ENCODE measurements at regions of chr7 and their contacts with region 1.

Region 1: DNA sequence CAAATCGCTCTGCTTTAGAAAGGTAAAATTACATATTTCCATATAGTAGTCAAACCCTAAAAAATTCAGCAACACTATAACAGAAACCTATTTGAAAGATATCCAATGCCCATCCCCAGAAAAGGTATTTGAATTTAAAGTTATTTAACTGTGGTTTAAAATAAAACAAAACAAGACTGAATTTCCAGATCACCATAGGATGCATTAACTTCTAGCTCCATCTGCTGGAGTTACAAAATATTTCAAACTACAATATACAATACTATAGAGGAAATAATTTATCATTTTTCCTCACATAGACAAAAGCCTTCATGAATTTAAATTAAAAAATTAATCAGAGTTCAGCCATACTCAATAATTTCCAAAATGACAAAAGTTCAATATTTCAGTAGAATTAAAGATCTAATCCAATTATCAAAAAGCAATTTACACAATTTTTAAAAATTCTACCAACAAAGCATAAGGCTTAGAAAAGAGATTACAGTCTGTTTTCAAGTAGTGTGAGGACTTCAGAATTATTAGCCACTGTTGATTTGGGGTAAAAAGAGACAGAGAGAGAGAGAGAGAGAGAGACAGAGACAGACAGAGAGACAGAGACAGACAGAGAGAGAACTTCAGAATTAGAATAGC is 75.9 kb downstream of the LMBR1 start:
- H3K4me3 Mint-ChIP-seq: no peak overlapping the region
- H3K27ac Mint-ChIP-seq: no peak overlapping the region
- H3K4me1 Mint-ChIP-seq: no peaks in the 10 kb centered on the region
- H3K27me3 Mint-ChIP-seq: no peaks in the 10 kb centered on the region

Region 2: DNA sequence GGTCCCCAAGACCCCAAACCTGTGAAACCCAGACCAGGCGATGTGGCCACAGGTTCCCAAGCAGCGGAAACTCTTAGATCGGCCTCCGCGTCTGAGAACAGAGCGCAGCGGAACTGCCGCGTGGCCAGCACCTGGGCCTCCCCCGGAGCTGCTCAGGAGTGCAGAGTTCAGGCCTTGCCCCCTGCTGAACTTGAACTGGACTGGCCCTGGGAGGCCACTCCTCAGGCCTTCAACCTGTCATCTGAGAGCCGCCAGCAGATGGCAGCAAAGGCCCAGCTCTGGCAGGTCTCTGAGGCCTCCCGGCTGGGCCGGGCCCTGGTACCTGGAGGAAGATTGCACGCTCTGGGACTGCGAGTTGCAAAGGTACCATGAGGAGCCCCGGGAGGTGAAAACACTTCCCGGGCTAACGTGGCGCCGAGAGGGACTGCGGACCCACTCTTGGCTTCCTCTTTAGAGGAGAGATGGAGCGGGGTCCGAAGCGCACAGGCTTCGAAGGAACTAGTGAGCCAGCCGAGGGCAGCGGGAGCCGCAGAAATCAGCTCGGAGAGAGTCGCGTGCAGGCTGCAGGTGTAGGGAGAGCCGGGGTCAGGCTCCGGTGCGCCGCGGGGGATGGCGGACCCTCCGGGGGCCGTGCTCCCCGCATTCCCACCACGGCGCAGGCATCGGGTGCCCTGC is 1903.3 kb before region 1 on chr7:
- intact Hi-C with region 1: loop called (anchors 10 kb)
- H3K4me3 Mint-ChIP-seq: peak overlapping the region; percentile 66
- H3K27ac Mint-ChIP-seq: no peak overlapping the region
- H3K4me1 Mint-ChIP-seq: peaks cover 5% of the 10 kb centered on the region
- H3K27me3 Mint-ChIP-seq: peaks cover 29% of the 10 kb centered on the region

Region 3: DNA sequence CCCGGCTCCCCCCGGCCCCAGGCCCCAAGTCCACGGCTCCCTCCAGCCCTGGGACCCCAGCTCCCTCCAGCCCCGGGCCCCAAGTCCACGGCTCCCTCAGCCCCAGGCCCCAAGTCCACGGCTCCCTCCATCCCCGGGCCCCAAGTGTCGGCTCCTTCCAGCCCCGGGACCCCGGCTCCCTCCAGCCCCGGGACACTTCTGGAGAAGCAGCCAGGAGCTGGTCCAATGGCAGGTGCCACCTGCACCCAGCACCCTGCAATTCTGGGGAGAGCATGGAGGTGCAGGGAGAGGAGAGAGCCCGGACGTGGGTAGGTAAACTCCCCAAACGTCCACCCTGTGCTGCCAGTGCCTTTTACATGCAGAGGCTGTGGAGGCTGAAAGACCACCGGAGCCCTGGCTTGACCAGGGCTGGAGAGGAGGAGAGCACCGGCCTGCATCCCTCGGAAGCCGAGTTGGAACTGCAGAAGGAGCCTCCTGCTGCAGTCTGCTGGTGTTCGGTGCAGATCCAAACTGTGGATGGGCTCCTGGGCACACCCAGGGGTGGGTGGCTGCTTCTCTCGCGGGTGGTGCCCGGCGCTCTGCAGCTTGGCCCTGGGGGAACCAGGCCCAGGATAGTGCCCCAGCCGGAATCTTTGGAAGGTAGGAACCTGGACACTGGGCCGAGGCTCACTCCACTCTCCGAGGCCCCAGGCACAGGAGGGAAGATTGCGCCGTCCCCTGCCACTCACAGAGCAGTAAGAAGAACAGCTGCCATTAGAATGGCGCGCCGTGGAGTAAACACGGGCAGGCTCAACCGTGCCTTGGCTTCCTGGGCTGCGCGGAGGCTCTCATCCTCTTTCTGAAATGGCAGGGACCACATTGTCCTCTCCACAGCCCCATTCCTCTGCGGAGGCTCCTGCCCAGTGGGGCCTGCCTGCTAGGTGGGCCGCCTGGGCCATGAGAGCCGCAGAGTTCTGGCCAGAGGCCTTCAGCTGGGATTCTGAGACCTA is 1019.5 kb before region 1 on chr7:
- intact Hi-C with region 1: loop called (anchors 2 kb)
- H3K4me3 Mint-ChIP-seq: no peak overlapping the region
- H3K27ac Mint-ChIP-seq: no peak overlapping the region
- H3K4me1 Mint-ChIP-seq: peaks cover 9% of the 10 kb centered on the region
- H3K27me3 Mint-ChIP-seq: peaks cover 67% of the 10 kb centered on the region

Region 4: DNA sequence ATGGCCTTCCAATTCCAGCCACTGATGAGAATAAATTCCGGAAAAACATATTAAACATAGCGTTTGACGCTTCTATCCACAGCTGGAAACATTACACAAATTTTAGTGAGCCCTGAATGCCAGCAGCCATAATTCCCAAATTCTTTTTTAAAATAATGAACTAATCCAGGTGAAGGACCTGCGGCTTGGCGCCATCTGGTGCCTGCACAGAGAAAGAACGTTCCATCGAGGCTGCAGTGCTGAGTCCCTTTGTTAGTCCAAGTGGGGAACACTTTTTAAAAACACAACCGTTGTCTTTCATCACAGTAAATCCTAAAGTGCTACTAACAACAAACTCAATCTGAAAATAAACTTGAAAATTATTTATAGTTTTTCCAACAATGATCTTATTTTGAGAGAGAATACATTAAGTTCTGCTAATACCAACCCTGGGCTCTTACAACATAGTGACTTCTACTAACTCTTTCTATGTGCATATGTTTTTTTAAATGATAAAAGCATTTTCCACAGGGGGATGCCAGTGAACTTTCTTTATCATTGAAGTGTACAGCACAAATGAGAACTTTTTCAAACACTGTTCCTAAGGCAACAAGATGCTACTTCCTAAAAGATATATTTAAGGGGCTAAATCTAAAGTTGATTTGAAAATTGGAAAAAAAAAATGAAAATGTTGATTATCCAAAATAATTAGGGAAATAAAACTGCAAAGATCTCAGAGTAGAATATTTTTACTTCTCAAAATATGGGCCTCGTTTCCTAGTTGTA is 343.4 kb before region 1 on chr7:
- intact Hi-C with region 1: loop called (anchors 10 kb)
- H3K4me3 Mint-ChIP-seq: no peak overlapping the region
- H3K27ac Mint-ChIP-seq: no peak overlapping the region
- H3K4me1 Mint-ChIP-seq: no peaks in the 10 kb centered on the region
- H3K27me3 Mint-ChIP-seq: peaks cover 3% of the 10 kb centered on the region

Region 5: GRCh38 chr7:156640257-156640948 is 176.7 kb before region 1 on chr7 and contains the start of gene RNF32:
- intact Hi-C with region 1: loop called (anchors 10 kb)
- H3K4me3 Mint-ChIP-seq: peak within 1 kb of the TSS; percentile 84
- H3K27ac Mint-ChIP-seq: peak within 1 kb of the TSS; percentile 86
- H3K4me1 Mint-ChIP-seq: peaks cover 14% of the 10 kb centered on the region
- H3K27me3 Mint-ChIP-seq: peaks cover 33% of the 10 kb centered on the region

Measured in dendritic cell treated with granulocyte-macrophage colony-stimulating factor and Interleukin-4, amounts not matched to agents 40 ng/mL and 50 ng/mL, for 4 days (primary cell).